ENCODE measurements at regions of chr1 and their contacts with region 1.

Region 1: GRCh38 chr1:31394628-31395193 is 18.3 kb upstream of the SERINC2 start:
- DNase-seq: peak; percentile 52
- H3K4me3 ChIP-seq: peak overlapping the region in 3 of 4 donors; percentile 28 to 57 (median 37)
- H3K27ac ChIP-seq: peak overlapping the region in 2 of 4 donors; percentile 19 to 38
- H3K4me1 ChIP-seq: peaks cover 10 to 30% (median 11%) of the 10 kb centered on the region in 3 donors
- H3K27me3 ChIP-seq: no peaks in the 10 kb centered on the region
- CTCF ChIP-seq: peak; percentile 77 to 94 (median 86)
- POLR2A ChIP-seq: no peak

Region 2: DNA sequence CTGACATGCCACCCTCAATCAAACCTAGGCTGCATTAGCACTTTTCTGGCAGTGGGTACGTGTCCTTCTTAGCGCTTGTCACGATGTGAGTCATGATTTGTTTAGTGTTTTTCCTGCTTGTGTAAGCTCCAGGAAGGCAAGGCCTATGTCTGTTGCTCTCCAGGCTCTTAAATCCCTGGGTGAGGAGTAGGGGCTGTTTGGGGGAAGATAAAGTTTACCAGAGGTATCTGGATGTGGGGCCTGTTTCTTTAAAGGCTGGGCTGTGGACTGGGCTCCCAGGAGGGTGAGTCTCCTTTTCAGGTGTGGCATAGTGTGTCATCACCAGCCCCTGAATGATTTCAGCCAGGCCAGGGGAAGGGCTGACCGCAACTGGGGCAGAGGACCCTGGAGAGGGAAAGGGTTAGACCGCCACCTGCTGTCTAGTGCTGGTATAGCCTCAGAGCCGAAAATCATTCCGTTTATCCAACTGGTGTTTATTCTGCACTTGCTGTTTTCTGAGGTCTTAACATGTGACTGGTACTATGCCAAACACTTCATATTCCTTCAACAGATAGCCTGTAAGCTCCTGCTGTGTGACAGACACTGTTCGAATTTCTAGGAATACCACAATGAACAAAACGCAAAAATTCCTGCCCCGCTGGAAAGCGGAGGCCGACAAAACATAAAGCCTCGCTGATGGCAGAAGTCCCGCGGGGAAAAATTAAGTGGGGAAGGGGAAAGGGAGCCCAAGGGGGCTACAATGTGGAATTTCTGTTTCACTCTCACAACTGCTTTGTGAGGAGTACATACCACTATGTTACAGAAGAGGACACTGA is 28.0 kb after region 1 on chr1:
- intact Hi-C with region 1: loop called (anchors 2 kb)
- DNase-seq: no peak
- H3K4me3 ChIP-seq: no peak overlapping the region
- H3K27ac ChIP-seq: peak overlapping the region in 3 of 4 donors; percentile 46 to 70 (median 68)
- H3K4me1 ChIP-seq: peaks cover 6 to 43% (median 7%) of the 10 kb centered on the region in 3 donors
- H3K27me3 ChIP-seq: peaks cover 0 to 4% (median 0%) of the 10 kb centered on the region in 4 donors
- CTCF ChIP-seq: peak; percentile 91 to 95 (median 92)
- POLR2A ChIP-seq: no peak